Sciatic nerve (tissue), 2 donors: ENCODE measurements at regions of chr9 and their contacts with region 1.

Region 1: DNA sequence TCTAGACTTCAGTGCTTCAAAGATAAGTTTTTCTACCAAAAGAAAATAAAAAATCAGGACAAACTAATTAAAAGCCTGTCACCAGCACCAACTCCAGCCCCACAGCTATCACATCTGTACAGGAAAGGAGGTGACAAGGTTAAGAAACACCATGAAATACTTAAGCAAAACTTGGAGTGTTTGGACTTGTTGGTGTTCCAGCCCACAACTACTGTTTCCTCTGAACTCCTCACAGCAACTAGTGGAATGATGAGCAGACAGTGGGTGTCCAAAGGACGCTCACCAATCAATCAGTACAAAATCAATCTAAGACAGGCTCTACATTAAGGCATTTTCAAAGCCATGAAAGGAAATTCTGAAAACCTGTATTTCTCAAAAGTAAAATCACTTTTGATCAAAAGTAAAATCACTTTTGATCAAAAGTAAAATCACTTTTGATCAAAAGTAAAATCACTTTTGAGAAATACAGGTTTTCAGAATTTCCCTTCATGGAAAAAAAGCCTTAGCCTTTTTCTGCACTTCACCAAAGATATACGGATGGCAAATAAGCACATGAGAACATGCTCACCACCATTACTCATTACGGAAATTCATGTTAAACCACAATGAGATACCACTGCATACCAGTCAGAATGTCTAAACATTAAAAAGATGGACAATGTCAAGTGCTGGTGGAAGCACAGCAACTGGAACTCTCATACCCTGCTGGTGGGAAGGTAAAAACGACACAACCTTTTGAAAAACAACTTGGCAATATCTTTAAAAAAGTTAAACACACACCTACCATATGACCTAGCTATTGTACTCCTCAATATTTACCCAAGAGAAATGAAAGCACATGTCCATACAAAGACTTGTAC is 79.7 kb downstream of the MED27 start:
- DNase-seq: no peak
- ATAC-seq: no peak

Region 2: DNA sequence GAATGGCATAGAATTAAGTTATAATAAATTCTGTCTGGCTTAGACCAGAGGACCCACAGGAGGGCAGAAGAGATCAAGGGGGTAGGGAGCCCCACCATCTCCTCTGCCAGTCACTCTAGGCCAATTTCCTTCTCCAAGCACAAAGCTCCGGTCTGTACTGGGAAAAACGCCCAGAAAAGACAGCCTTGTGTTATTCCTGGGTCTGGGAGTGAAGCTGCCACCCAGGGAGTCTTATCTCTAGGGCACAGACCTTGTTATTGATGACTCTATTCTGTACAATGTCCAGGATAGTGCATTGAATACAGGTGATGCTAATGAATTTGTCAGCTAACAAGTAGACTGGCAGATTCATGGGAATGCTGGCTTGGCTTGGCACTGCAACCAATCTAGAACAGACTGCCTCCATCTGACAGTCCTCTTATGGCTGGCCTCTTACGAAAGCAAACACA is 19.1 kb after region 1 on chr9:
- intact Hi-C with region 1: no loop called
- DNase-seq: no peak
- ATAC-seq: no peak

Region 3: DNA sequence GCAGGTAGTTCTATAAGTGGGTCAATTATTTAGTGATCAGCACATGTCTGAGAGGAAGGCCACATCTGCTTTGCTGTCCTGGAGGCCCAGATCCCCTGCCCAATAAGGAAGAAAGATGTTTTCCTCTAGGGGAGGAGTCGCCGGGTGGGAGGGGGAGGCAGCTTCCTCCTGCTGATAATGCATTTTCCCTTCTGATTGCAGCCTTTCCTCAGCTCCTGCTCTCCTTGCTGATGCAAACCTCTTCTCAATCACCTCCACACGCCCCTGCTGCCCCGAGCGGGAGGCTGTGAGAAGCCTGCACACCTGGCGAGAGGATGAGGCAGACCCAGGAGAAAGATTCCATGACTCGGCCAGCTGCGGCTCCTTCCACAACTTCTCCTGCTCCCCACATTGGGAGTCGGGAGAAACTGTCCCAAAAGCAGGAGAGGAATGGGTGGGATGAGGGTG is 155.0 kb after region 1 on chr9:
- intact Hi-C with region 1: loop called (anchors 10 kb)
- DNase-seq: no peak
- ATAC-seq: no peak

Region 4: GRCh38 chr9:133115448-133116345 is 1115.8 kb after region 1 on chr9:
- intact Hi-C with region 1: no loop called
- DNase-seq: no peak
- ATAC-seq: no peak

Region 5: GRCh38 chr9:133845440-133845839 is 1845.5 kb after region 1 on chr9:
- intact Hi-C with region 1: no loop called
- DNase-seq: peak; percentile 81
- ATAC-seq: peak; percentile 82